Activated naive CD4-positive, alpha-beta T cell treated with anti-CD3 and anti-CD28 coated beads for 36 hours (primary cell): ENCODE measurements at regions of chr15 and their contacts with region 1.

Region 1: GRCh38 chr15:48946088-48946839 is 17.5 kb downstream of the SHC4 start:
- DNase-seq: no peak
- H3K4me3 Mint-ChIP-seq: no peak overlapping the region
- H3K27ac Mint-ChIP-seq: no peak overlapping the region
- H3K4me1 Mint-ChIP-seq: peaks cover 8% of the 10 kb centered on the region
- H3K27me3 Mint-ChIP-seq: peaks cover 7% of the 10 kb centered on the region

Region 2: DNA sequence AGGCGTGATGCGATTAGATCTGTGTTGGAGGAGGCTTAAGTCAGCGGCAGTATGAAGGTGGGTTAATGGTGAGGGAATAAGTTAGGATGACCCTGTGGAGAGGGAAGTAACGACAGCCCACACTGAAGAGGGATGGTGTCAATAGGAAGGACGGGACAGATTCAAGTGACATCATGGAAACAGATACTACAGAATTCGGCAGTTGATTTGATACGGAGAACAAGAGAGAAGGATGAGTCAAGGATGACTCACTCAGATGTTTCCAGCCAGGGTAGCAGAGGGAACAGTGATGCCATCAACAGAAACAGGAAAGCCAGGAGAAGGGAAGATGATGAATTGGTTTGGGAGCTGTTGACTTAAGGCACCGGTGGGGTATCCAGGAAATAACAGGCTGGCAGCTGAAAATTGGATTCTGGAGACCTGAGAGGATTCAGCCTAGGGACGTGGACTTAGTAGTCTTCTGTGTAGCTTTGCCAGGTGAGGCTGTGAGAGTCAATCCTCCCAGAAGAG is 20.5 kb before region 1 on chr15:
- CTCF ChIA-PET with region 1: no interaction called
- intact Hi-C with region 1: loop called (anchors 2 kb)
- DNase-seq: peak; percentile 19
- H3K4me3 Mint-ChIP-seq: no peak overlapping the region
- H3K27ac Mint-ChIP-seq: peak overlapping the region; percentile 37
- H3K4me1 Mint-ChIP-seq: peaks cover 31% of the 10 kb centered on the region
- H3K27me3 Mint-ChIP-seq: peaks cover 13% of the 10 kb centered on the region

Region 3: DNA sequence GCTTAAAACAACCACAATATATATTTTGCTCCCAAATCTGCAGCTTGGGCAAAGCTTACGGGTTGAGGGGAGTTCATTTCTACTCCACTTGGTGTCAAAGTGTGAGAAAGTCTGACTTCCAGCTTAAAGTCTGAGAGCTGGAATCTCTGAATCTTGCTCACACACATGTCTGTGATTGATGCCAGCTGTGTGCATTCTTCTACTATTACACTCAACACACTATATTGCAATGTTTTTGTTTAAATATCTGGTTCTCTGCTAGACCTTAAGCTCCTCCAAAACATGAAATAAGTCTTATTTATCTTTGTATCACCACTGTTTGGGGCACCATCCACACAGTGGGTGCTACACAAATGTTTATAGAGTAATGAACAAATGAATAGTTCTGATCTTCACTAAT is 136.7 kb after region 1 on chr15:
- CTCF ChIA-PET with region 1: no interaction called
- intact Hi-C with region 1: no loop called
- DNase-seq: no peak
- H3K4me3 Mint-ChIP-seq: no peak overlapping the region
- H3K27ac Mint-ChIP-seq: no peak overlapping the region
- H3K4me1 Mint-ChIP-seq: no peaks in the 10 kb centered on the region
- H3K27me3 Mint-ChIP-seq: no peaks in the 10 kb centered on the region